Mammary epithelial cell (primary cell): ENCODE measurements at regions of chr18 and their contacts with region 1.

Region 1: GRCh38 chr18:46281185-46282176 is 177.3 kb downstream of the HAUS1 start:
- DNase-seq: peak; percentile 65
- H3K4me3 ChIP-seq: no peak overlapping the region
- H3K27ac ChIP-seq: no peak overlapping the region
- H3K4me1 ChIP-seq: peaks cover 11% of the 10 kb centered on the region
- H3K27me3 ChIP-seq: no peaks in the 10 kb centered on the region
- CTCF ChIP-seq: peak; percentile 96 to 97

Region 2: DNA sequence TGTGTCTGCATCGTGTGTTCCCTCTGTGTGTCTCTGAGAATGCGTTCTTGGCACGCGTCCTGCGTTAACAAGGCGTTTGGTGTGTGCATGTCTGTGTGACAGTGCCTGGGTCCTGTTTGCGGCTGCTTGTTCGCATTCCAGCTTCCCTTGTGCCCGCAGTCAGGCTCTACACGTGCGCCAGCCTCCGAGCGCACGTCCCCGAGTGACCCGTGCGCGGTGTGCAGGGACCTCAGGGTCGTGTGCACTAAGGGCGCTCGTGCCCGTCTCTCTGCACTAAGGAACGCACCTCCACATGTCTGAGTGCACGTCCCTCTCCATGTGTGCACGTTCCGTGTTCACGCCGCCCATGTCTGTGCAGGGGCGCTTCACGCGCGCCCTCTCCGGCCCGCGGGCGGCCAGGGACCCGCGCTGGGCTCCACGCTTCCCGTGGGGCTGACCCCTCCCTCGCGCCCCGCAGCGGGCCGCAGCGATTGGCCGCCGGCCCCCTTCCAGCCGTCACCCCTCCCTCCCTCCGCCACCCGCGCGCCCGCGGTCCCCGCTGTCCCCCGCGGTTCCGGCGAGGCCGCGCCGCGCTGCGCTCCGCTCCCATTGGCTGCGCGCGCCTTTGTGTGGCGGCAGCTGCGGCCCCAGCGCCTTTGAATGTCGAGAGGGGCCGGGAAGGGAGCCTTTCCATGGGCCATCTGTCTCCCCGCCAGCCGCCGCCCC is 52.1 kb after region 1 on chr18:
- CTCF ChIA-PET with region 1: no interaction called
- dilution Hi-C with region 1: loop called (anchors 5 kb)
- in situ Hi-C with region 1: no loop called
- intact Hi-C with region 1: no loop called
- DNase-seq: peak; percentile 45
- H3K4me3 ChIP-seq: peak overlapping the region in 2 of 3 experiments; percentile 55 to 57
- H3K27ac ChIP-seq: no peak overlapping the region
- H3K4me1 ChIP-seq: peaks cover 16% of the 10 kb centered on the region
- H3K27me3 ChIP-seq: no peaks in the 10 kb centered on the region
- CTCF ChIP-seq: no peak

Region 3: GRCh38 chr18:46481048-46481846 is 199.8 kb after region 1 on chr18:
- CTCF ChIA-PET with region 1: interaction called, 3 read pairs
- dilution Hi-C with region 1: no loop called
- in situ Hi-C with region 1: no loop called
- intact Hi-C with region 1: loop called (anchors 1 kb)
- DNase-seq: no peak
- H3K4me3 ChIP-seq: no peak overlapping the region
- H3K27ac ChIP-seq: no peak overlapping the region
- H3K4me1 ChIP-seq: no peaks in the 10 kb centered on the region
- H3K27me3 ChIP-seq: no peaks in the 10 kb centered on the region
- CTCF ChIP-seq: peak; percentile 65

Region 4: GRCh38 chr18:46622999-46623398 is 341.5 kb after region 1 on chr18:
- CTCF ChIA-PET with region 1: interaction called, 21 read pairs
- dilution Hi-C with region 1: no loop called
- in situ Hi-C with region 1: loop called in 1 of 2 experiments (anchors 10 kb)
- intact Hi-C with region 1: loop called (anchors 1 kb)
- DNase-seq: peak; percentile 16
- H3K4me3 ChIP-seq: no peak overlapping the region
- H3K27ac ChIP-seq: no peak overlapping the region
- H3K4me1 ChIP-seq: peaks cover 14% of the 10 kb centered on the region
- H3K27me3 ChIP-seq: no peaks in the 10 kb centered on the region
- CTCF ChIP-seq: peak in 1 of 2 donors; percentile 21